A549 (cell line): ENCODE measurements at regions of chr13 and their contacts with region 1.

Region 1: GRCh38 chr13:79405829-79406596 is at the start of gene RBM26:
- DNase-seq: peak; percentile 80 to 92
- ATAC-seq: peak; percentile 88 to 93
- H3K4me3 ChIP-seq: peak within 1 kb of the TSS; percentile 82
- H3K27ac ChIP-seq: peak within 1 kb of the TSS; percentile 94 to 100
- H3K4me1 ChIP-seq: peaks cover 40% of the 10 kb centered on the region
- CTCF ChIP-seq: no peak; the same call in 2 of the 3 replicates
- EP300 ChIP-seq: no peak
- POLR2A ChIP-seq: peak; percentile 72
- RAD21 ChIP-seq: no peak
- polyA plus RNA-seq, gene RBM26: 25.3 and 29.5 TPM in 2 replicates

Region 2: GRCh38 chr13:79380997-79381396 is 25.0 kb before region 1 on chr13:
- CTCF ChIA-PET with region 1: no interaction called
- POLR2A ChIA-PET with region 1: no interaction called
- DNase-seq: no peak
- ATAC-seq: no peak
- H3K4me3 ChIP-seq: no peak overlapping the region
- H3K27ac ChIP-seq: no peak overlapping the region
- H3K4me1 ChIP-seq: peaks cover 30% of the 10 kb centered on the region
- CTCF ChIP-seq: no peak
- EP300 ChIP-seq: no peak
- POLR2A ChIP-seq: no peak
- RAD21 ChIP-seq: no peak

Region 3: DNA sequence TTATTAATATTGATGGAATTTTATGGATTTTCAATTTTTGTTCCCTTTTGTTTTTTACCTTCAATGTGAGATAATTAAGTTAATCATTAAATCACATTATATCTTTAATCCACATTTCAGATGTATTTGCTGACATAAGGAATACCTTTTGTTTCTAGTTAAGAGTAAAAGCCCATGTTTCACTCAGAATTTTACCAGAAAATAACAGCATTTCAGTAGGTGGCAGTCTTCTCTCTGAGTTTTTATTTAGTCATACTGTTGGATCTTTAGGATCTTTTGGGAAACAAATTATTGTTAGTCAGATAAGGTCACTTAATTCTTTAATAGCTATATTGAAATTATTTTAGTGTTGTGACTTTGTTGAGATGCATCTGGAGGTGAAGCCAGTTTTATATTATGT is 142.9 kb after region 1 on chr13:
- CTCF ChIA-PET with region 1: no interaction called
- POLR2A ChIA-PET with region 1: interaction called, 12 read pairs
- DNase-seq: peak in 1 of 2 experiments; percentile 7
- ATAC-seq: no peak
- H3K4me3 ChIP-seq: no peak overlapping the region
- H3K27ac ChIP-seq: no peak overlapping the region
- H3K4me1 ChIP-seq: peaks cover 15% of the 10 kb centered on the region; the same call in 1 of the 3 replicates
- CTCF ChIP-seq: peak; percentile 38; the same call in 2 of the 3 replicates
- EP300 ChIP-seq: no peak
- POLR2A ChIP-seq: no peak
- RAD21 ChIP-seq: peak; percentile 34 to 58; a peak in 4 of 5 replicates